ENCODE measurements at regions of chr10 and their contacts with region 1.

Region 1: GRCh38 chr10:110311357-110311949 is 6.7 kb upstream of the SMNDC1 start:
- DNase-seq: peak in 2 of 4 experiments; percentile 40 to 67
- ATAC-seq: peak; percentile 87
- H3K4me3 ChIP-seq: no peak overlapping the region
- H3K27ac ChIP-seq: no peak overlapping the region
- H3K4me1 ChIP-seq: no peaks in the 10 kb centered on the region; a peak in 1 of 5 replicates
- H3K27me3 ChIP-seq: peaks cover 2 to 6% of the 10 kb centered on the region in 2 experiments; a peak in 1 of 5 replicates
- CTCF ChIP-seq: peak; percentile 56 to 76 (median 59); a peak in 5 of 6 replicates
- EP300 ChIP-seq: no peak
- POLR2A ChIP-seq: no peak
- RAD21 ChIP-seq: peak; percentile 79 to 81

Region 2: DNA sequence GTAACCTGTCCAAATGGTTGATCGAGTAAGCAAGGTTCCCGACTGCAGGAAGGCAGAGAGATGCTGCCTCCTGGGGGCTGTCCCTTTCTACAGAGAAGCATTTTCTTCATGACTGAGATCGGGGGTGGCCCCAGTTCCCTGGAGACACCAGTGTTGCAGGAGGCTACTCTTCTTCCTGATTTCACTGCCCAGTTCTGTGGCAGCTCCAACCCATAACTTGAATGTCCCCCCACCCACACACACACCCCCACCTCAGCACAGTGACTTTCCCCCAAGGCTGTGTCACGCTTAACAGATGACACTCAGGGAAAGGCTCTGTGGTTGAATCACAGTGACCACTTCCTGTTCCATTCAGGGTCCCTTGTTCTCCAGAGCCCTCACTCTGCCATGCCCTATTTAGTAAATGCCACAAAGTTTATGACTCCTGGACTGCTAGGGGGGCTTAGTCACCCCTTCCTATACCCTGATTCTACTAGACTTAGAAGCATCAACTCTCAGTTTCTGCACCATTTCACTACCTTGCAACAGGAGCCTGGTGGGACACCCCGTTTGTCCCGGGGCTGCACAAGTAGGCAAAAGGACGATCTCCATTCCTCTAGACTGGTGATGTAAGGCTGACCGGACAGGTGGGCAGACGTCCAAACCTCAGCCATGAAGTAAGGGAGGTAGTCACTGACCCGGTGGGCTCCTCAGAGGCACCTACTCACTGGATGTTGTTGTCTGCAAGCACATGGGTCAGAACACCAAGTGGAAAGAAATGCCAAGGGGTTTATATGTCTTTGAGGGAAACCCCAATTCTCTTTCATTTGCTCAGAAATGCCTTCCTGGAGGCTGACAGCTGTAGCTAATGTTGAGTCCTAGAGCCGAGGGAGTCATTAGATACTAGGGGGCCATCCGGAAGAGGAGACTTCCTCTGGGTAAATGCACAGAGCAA is 224.8 kb after region 1 on chr10:
- CTCF ChIA-PET with region 1: interaction called, 13 read pairs
- POLR2A ChIA-PET with region 1: interaction called, 3 read pairs
- in situ Hi-C with region 1: no loop called
- intact Hi-C with region 1: loop called (anchors 1 kb)
- DNase-seq: peak in 2 of 4 experiments; percentile 28 to 54
- ATAC-seq: peak; percentile 92
- H3K4me3 ChIP-seq: no peak overlapping the region
- H3K27ac ChIP-seq: no peak overlapping the region
- H3K4me1 ChIP-seq: peaks cover 0 to 4% of the 10 kb centered on the region in 2 experiments; a peak in 2 of 5 replicates
- H3K27me3 ChIP-seq: no peaks in the 10 kb centered on the region
- CTCF ChIP-seq: peak; percentile 60 to 75 (median 62)
- EP300 ChIP-seq: no peak
- POLR2A ChIP-seq: no peak
- RAD21 ChIP-seq: peak; percentile 77 to 89

Region 3: DNA sequence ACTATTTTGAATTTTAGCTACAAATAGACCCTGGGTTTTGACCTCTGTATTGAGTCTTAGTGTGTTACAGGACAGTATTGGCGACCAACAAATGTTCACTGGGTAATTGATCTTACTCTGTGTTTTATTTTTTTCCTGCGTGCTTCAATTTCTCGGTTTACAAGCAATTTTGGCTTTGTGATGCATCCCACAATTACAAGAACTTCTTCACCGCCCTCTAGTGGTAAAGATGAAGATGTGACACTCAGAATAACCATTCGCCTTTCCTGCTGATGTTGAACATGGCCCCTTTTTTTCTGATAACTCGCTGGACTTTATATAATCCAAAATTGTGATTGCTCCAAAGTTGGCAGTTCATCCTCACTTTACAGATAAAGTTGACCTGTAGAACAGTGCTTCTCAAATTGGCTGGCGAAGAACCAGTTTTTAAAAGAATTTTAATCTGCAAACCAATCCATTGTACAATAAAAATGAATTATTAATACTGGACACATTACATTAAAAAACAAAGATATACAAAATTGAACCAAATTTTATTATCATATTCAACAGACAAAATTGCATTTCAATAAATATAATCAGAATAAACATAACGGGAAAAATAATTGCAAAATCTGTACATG is 235.8 kb after region 1 on chr10:
- CTCF ChIA-PET with region 1: interaction called, 10 read pairs
- POLR2A ChIA-PET with region 1: no interaction called
- in situ Hi-C with region 1: loop called (anchors 5 kb)
- intact Hi-C with region 1: loop called (anchors 1 kb)
- DNase-seq: peak; percentile 54 to 57 (median 55)
- ATAC-seq: peak; percentile 75
- H3K4me3 ChIP-seq: no peak overlapping the region
- H3K27ac ChIP-seq: no peak overlapping the region
- H3K4me1 ChIP-seq: no peaks in the 10 kb centered on the region
- H3K27me3 ChIP-seq: no peaks in the 10 kb centered on the region; a peak in 2 of 5 replicates
- CTCF ChIP-seq: peak; percentile 61 to 77 (median 67)
- EP300 ChIP-seq: no peak
- POLR2A ChIP-seq: no peak
- RAD21 ChIP-seq: peak; percentile 70 to 82

Region 4: DNA sequence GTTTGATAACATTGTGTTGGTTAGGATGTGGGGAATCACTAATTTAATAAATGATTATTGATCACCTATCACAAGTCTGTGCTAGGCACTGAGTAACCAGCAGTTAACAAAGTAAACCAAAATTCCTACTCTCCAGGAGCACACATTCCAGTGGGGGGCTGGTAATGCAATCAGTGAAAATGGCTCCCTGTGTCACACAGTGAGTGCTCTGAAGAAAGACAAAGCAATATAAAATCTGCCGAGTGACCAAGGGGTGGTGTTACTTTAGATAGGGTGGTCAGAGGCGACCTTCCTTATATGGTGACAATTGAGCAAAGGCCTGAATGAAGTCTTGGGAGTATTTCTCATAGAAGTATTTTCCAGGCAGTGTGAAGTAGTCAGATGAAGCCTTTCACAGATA is 242.5 kb after region 1 on chr10:
- CTCF ChIA-PET with region 1: no interaction called
- POLR2A ChIA-PET with region 1: no interaction called
- in situ Hi-C with region 1: loop called (anchors 5 kb)
- intact Hi-C with region 1: no loop called
- DNase-seq: no peak
- ATAC-seq: no peak
- H3K4me3 ChIP-seq: no peak overlapping the region
- H3K27ac ChIP-seq: no peak overlapping the region
- H3K4me1 ChIP-seq: no peaks in the 10 kb centered on the region; a peak in 1 of 5 replicates
- H3K27me3 ChIP-seq: no peaks in the 10 kb centered on the region; a peak in 3 of 5 replicates
- CTCF ChIP-seq: no peak
- EP300 ChIP-seq: no peak
- POLR2A ChIP-seq: no peak
- RAD21 ChIP-seq: no peak

Region 5: DNA sequence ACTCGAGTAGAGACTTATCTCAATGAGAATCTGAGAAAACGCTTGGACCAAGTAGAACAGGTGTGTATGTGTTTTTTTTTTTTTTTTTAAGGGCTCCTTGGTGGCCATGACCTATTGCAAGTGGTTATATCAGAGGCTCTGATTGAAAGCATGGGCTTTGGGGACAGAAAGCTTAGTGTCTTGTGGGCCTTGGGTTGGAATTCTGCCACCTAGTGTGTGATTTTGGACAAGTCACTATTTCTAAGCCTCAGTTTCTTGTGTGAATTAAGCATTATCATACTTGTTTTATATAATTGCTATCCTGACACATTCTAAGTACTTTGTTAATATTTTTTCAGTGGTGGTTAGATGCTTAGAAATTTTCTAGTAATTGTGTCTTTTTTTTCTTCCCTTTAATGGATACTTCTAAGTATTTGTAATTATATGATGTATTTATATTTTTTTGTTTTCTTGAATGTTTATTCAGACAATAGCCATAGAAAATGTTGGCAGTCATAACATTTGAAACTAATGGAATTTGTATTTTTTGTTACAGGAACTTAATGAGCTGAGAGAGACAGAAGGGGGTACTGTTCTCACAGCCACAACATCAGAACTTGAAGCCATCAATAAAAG is 289.1 kb after region 1 on chr10:
- CTCF ChIA-PET with region 1: interaction called, 4 read pairs
- POLR2A ChIA-PET with region 1: no interaction called
- in situ Hi-C with region 1: no loop called
- intact Hi-C with region 1: loop called (anchors 2 kb)
- DNase-seq: peak in 3 of 4 experiments; percentile 13 to 62 (median 21)
- ATAC-seq: peak; percentile 87
- H3K4me3 ChIP-seq: no peak overlapping the region
- H3K27ac ChIP-seq: no peak overlapping the region
- H3K4me1 ChIP-seq: no peaks in the 10 kb centered on the region
- H3K27me3 ChIP-seq: no peaks in the 10 kb centered on the region
- CTCF ChIP-seq: peak; percentile 45 to 52 (median 48); a peak in 5 of 6 replicates
- EP300 ChIP-seq: no peak
- POLR2A ChIP-seq: no peak
- RAD21 ChIP-seq: peak; percentile 31 to 49; a peak in 3 of 4 replicates

Region 6: GRCh38 chr10:110774069-110775019 is 462.9 kb after region 1 on chr10:
- CTCF ChIA-PET with region 1: no interaction called
- POLR2A ChIA-PET with region 1: no interaction called
- in situ Hi-C with region 1: no loop called
- intact Hi-C with region 1: loop called (anchors 10 kb)
- DNase-seq: peak; percentile 78 to 87 (median 84)
- ATAC-seq: peak; percentile 89
- H3K4me3 ChIP-seq: no peak overlapping the region
- H3K27ac ChIP-seq: peak overlapping the region; percentile 93
- H3K4me1 ChIP-seq: peaks cover 9 to 53% of the 10 kb centered on the region in 2 experiments; a peak in 4 of 5 replicates
- H3K27me3 ChIP-seq: no peaks in the 10 kb centered on the region
- CTCF ChIP-seq: no peak
- EP300 ChIP-seq: peak; percentile 76; the same call in 1 of the 2 replicates
- POLR2A ChIP-seq: no peak
- RAD21 ChIP-seq: no peak

Region 7: GRCh38 chr10:112140110-112140970 is 1828.9 kb after region 1 on chr10:
- CTCF ChIA-PET with region 1: no interaction called
- POLR2A ChIA-PET with region 1: no interaction called
- in situ Hi-C with region 1: no loop called
- intact Hi-C with region 1: loop called (anchors 10 kb)
- DNase-seq: peak; percentile 84 to 88 (median 86)
- ATAC-seq: peak; percentile 99
- H3K4me3 ChIP-seq: no peak overlapping the region
- H3K27ac ChIP-seq: no peak overlapping the region
- H3K4me1 ChIP-seq: no peaks in the 10 kb centered on the region; a peak in 2 of 5 replicates
- H3K27me3 ChIP-seq: peaks cover 0 to 16% of the 10 kb centered on the region in 2 experiments; a peak in 2 of 5 replicates
- CTCF ChIP-seq: peak; percentile 91 to 94 (median 93)
- EP300 ChIP-seq: no peak
- POLR2A ChIP-seq: no peak
- RAD21 ChIP-seq: peak; percentile 42 to 71

Measured in K562 (cell line).